Upper lobe of right lung (tissue), 1 donor: ENCODE measurements at regions of chr19 and their contacts with region 1.

Region 1: DNA sequence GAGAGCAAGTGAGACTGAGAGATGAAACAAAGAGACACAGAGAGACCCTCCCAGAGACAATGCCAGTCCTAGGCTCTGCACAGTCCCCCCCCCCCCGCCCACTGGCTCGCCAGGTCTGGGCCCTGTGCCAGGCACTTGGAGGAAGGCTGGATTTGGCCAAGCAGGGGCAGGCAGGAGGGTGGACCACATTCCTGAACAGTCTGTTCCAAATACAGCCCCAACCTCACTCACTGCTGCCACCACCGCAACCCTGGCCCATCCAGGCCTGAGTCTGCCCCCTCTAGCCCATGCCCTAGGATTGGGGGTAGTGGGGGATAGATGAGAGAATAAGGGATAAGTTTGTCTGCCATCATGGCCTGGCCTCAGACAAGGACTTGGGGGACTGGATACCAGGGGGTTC is 19.0 kb downstream of the CYP2F1 start:
- DNase-seq: peak; percentile 77
- ATAC-seq: peak; percentile 57
- H3K4me3 ChIP-seq: no peak overlapping the region
- H3K27ac ChIP-seq: no peak overlapping the region
- H3K4me1 ChIP-seq: no peaks in the 10 kb centered on the region
- H3K27me3 ChIP-seq: no peaks in the 10 kb centered on the region
- CTCF ChIP-seq: no peak

Region 2: DNA sequence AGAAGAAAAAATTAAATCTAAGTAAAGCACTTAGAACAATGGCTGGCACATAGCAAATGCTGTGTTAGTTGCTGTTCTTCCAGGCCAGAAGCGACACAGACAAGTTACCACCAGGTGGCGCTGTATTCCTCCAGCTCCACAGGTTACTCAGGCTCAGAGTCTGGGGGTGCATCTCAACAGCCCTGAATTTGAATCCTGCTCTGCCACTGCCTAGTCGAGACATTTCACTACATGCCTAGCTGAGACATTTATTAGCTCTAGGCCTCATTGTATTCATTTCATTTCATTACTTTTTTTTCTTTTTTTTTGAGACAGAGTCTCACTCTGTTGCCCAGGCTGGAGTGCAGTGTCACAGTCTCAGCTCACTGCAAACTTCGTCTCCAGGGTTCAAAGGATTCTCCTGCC is 158.6 kb before region 1 on chr19:
- intact Hi-C with region 1: loop called (anchors 10 kb)
- DNase-seq: peak; percentile 72
- ATAC-seq: peak; percentile 94
- H3K4me3 ChIP-seq: no peak overlapping the region
- H3K27ac ChIP-seq: no peak overlapping the region
- H3K4me1 ChIP-seq: no peaks in the 10 kb centered on the region
- H3K27me3 ChIP-seq: peaks cover 4% of the 10 kb centered on the region
- CTCF ChIP-seq: peak; percentile 98